Activated CD8-positive, alpha-beta memory T cell treated with anti-CD3 and anti-CD28 coated beads, Interleukin-2, amount 10 ng/mL, durations not matched to agents 7 days and 5 days (primary cell): ENCODE measurements at regions of chr2 and their contacts with region 1.

Region 1: DNA sequence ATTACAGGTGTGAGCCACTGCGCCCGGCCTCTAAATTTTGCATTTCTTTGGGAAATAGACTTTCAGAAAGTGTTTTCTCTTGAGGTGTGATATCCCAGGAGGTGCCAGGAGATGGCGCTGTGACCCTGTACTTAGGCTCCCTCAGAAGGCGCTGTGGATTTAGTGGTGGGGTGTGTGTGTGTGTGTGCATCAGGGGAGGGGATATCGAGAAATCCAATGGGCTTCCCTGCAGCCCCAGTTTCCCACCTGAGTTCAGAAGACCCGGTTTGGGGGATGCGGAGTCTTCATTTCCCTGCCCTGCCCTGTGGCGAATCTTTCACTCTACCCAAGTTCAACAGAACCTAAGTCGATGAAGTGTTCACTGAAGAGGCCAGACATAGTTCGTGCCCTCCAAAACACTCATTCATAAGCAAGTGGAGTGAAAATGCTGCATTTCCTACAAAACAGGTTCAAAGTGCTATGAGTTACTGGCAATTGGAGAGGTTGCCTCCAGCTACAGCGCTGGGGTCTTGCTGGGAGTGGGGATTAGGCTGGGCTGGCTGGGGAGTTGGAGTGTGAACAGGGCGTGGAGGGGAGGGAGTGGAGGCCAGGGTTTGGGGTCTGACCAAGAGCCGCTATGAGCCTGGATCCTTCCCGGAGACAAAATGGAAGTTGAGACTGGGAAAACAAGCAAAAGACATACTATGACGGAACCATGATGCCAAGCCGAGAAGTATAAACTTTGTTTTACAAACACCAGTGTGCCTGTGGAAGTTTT is 6.5 kb upstream of the WNT6 start:
- DNase-seq: peak; percentile 73
- ATAC-seq: peak; percentile 68
- H3K4me3 Mint-ChIP-seq: no peak overlapping the region
- H3K27ac Mint-ChIP-seq: no peak overlapping the region
- H3K4me1 Mint-ChIP-seq: no peaks in the 10 kb centered on the region
- H3K27me3 Mint-ChIP-seq: peaks cover 70% of the 10 kb centered on the region

Region 2: DNA sequence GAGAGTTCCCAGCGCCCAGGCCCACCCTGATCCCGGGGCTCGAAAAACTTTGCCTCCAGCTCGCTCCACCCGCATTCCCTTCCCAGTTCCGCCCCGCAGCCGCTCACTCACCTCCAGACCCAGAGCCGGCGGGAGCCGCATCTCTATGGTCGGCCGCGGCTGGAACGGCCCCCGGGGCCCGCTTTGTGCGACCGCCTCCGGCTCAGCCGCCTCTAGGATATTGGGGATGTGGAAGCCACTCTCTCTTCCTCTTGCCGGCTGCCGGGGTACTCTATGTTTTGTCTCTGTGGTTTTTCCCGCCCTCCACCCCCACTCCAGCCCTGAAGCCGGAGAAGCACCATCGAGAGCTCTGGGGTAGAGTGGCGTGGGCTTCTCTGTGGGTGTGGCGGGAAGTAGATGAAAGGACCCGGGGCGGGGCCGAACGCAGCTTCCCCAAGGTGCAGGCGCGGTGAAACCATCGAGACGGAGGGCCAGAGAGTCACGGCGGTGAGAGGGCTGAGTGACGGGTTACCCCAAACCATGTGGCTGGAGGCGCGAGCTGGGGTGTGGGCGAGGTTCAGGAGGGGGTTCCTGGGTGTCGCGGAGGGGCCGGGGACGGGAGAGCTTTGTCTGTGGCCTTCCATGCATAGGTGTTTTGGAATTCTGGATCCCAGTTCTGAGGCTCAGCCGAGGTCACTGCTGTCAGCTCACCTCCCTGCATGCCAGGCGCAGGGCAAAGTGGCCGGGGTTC is 193.7 kb before region 1 on chr2 and contains the starts of genes BCS1L and ZNF142:
- CTCF ChIA-PET with region 1: interaction called, 82 read pairs
- DNase-seq: peak; percentile 97
- ATAC-seq: peak; percentile 97
- H3K4me3 Mint-ChIP-seq: peak within 1 kb of the TSS; percentile 90
- H3K27ac Mint-ChIP-seq: peak within 1 kb of the TSS; percentile 86
- H3K4me1 Mint-ChIP-seq: peaks cover 38% of the 10 kb centered on the region
- H3K27me3 Mint-ChIP-seq: no peaks in the 10 kb centered on the region
- total RNA-seq, gene BCS1L: 55.2 to 67.6 TPM
- total RNA-seq, gene ZNF142: 54.2 to 55.4 TPM

Region 3: DNA sequence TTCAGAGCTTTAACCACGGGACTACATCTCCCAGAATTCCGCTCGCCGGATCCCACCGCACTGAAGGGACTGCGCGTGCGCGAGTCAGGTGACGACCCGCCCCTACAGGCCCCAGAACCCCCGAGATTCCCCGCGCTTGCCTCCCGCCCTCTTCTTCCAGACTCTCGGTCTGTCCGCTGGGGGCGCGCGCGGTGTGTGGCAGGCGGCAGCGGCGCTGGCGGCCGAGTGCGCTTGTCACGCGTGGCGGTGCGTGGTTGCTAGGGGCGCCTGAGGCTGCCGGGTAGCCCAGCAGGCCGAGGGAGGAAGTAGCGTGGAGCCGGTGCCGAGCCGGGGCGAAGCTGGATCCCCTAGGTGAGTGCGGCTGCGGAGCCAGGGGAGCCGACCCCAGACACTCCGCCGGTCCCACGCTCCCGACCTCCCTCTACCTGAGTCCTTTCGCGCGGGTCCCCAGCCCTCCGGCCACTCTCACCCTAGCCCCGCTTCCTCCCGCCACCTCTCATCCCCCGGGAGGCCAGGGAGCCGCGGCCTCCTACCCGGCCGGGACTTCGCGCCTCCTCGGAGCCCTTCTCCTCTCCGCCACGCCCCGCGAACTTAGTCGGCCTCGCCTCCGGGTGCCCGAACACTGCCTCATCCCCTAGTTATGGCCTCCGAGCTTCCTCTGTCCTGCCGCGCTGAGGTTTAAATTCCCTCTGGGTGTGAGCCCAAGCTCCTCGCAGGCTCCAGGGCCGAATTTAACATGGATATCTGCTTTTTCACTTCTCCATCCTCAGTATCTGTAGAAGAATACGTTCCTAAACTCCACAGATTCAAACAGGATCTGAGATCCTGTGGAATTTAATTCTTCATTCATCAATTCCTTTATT is 142.2 kb before region 1 on chr2 and contains the start of gene TTLL4:
- CTCF ChIA-PET with region 1: interaction called, 17 read pairs
- DNase-seq: peak; percentile 98
- ATAC-seq: peak; percentile 95
- H3K4me3 Mint-ChIP-seq: peak within 1 kb of the TSS; percentile 90
- H3K27ac Mint-ChIP-seq: peak within 1 kb of the TSS; percentile 80
- H3K4me1 Mint-ChIP-seq: peaks cover 52% of the 10 kb centered on the region
- H3K27me3 Mint-ChIP-seq: peaks cover 7% of the 10 kb centered on the region
- total RNA-seq, gene TTLL4: 39.6 to 40.4 TPM

Region 4: GRCh38 chr2:218876562-218877219 is 23.6 kb after region 1 on chr2:
- CTCF ChIA-PET with region 1: interaction called, 11 read pairs
- DNase-seq: peak; percentile 71
- ATAC-seq: no peak
- H3K4me3 Mint-ChIP-seq: no peak overlapping the region
- H3K27ac Mint-ChIP-seq: no peak overlapping the region
- H3K4me1 Mint-ChIP-seq: peaks cover 17% of the 10 kb centered on the region
- H3K27me3 Mint-ChIP-seq: peaks cover 78% of the 10 kb centered on the region